GM10248 (cell line): ENCODE measurements at regions of chr9 and their contacts with region 1.

Region 1: DNA sequence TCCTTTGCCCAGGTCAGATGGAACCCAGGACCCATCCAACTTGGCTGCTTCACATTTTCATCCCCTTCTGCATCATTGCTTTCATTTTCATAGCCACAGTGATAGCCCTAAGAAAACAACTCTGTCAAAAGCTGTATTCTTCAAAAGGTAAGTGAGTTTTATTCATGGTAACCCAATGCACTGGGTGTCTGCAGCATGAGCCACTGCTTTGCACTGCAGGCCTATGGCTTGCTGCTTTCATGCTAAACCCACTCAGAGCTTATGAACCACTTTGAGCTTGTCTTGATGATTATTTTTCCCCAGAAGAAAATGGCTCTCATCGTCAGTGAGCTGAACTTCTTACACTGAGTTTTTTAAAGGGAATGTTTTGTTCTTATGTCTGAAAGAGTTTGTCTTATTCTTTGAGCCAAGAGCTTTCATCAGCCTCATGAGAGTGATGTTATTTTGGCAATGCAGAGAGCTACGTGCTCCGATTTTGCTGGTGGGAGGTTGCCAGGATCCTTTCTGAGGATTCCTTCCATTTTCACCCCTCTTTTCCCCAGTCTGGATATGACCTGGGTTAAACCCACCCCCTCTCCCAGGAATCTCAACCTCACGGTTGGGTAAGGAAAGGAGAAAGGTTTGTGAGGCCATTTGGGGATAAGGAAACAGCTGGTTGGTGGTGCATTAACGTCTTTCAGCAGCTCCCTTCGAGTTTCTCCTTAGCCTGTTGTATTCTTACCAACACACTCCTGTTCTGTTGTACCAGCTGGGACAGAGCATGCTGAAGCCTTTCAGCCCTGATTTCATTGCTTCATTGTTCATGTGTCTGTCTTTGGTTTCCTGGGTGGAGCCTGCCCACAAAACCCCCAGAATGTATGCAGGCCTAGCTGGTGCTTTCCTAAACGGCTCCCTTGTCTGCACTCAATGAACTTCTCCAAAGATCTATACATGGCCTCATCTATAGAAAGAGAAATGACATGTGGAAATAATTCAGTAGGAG is 47.6 kb downstream of the PDCD1LG2 start:
- DNase-seq: peak; percentile 42
- CTCF ChIP-seq: no peak

Region 2: GRCh38 chr9:5042641-5043277 is 515.1 kb before region 1 on chr9:
- CTCF ChIA-PET with region 1: no interaction called
- POLR2A ChIA-PET with region 1: no interaction called
- DNase-seq: no peak
- CTCF ChIP-seq: no peak

Region 3: DNA sequence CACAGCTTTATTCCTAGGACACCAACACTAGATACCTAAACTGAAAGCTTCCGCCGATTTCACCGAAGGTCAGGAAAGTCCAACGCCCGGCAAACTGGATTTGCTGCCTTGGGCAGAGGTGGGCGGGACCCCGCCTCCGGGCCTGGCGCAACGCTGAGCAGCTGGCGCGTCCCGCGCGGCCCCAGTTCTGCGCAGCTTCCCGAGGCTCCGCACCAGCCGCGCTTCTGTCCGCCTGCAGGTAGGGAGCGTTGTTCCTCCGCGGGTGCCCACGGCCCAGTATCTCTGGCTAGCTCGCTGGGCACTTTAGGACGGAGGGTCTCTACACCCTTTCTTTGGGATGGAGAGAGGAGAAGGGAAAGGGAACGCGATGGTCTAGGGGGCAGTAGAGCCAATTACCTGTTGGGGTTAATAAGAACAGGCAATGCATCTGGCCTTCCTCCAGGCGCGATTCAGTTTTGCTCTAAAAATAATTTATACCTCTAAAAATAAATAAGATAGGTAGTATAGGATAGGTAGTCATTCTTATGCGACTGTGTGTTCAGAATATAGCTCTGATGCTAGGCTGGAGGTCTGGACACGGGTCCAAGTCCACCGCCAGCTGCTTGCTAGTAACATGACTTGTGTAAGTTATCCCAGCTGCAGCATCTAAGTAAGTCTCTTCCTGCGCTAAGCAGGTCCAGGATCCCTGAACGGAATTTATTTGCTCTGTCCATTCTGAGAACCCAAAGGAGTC is 107.4 kb before region 1 on chr9 and contains the start of gene CD274:
- CTCF ChIA-PET with region 1: interaction called, 10 read pairs
- POLR2A ChIA-PET with region 1: no interaction called
- DNase-seq: peak; percentile 75
- CTCF ChIP-seq: peak; percentile 81

Region 4: GRCh38 chr9:5569409-5569808 is 11.5 kb after region 1 on chr9:
- CTCF ChIA-PET with region 1: interaction called, 18 read pairs
- POLR2A ChIA-PET with region 1: interaction called, 3 read pairs
- DNase-seq: no peak
- CTCF ChIP-seq: no peak

Region 5: DNA sequence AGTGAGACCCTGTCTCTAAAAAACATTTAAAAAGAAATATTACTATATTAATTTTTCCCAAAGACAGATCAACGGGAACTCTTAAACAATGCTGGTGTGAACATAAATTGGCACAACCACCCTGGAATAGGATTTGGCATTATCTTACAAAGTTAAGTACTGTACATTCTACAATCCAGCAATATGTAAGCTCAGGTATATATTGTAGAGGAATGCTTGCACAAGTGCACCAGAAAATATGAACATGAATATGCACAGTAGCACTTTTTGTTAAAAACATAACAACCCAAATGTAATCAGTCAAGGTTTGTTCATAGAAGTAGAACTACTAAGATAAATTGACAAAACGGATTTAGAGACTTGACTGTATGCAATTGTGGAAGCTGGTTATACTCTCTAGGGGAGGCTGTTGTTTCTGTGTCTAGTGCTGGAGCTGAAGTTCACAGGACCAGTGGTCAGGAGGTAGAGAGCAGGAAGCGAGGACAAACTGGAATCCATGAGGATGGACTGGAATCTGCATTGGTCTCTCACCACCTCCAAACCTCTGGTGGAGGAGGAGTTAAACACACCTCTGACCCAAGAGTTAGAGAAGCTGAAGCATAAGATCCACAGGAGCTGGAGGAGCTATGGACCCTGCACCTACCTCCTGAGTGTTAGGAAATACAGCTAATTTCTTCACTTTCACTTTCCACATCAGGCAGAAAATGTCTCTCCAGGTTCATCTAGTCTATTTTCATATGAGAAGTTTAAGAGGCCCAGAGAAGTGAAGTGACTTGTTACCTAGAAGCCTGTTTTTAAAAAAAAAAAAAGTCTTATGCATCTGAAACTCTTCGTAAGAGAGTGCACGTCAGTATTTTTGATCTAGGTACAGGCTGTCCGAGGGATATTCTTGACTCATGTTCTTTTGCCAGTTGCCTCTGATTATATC is 50.7 kb after region 1 on chr9:
- CTCF ChIA-PET with region 1: no interaction called
- POLR2A ChIA-PET with region 1: no interaction called
- DNase-seq: no peak
- CTCF ChIP-seq: peak; percentile 23